ENCODE measurements at regions of chr17 and their contacts with region 1.

Region 1: GRCh38 chr17:75205037-75205792 is at the start of gene NUP85:
- DNase-seq: peak; percentile 89 to 96
- H3K4me3 ChIP-seq: peak within 1 kb of the TSS; percentile 81 to 92
- H3K27ac ChIP-seq: peak within 1 kb of the TSS; percentile 89 to 92
- H3K4me1 ChIP-seq: peaks cover 0 to 24% (median 12%) of the 10 kb centered on the region in 4 donors
- H3K27me3 ChIP-seq: no peaks in the 10 kb centered on the region
- CTCF ChIP-seq: no peak

Region 2: DNA sequence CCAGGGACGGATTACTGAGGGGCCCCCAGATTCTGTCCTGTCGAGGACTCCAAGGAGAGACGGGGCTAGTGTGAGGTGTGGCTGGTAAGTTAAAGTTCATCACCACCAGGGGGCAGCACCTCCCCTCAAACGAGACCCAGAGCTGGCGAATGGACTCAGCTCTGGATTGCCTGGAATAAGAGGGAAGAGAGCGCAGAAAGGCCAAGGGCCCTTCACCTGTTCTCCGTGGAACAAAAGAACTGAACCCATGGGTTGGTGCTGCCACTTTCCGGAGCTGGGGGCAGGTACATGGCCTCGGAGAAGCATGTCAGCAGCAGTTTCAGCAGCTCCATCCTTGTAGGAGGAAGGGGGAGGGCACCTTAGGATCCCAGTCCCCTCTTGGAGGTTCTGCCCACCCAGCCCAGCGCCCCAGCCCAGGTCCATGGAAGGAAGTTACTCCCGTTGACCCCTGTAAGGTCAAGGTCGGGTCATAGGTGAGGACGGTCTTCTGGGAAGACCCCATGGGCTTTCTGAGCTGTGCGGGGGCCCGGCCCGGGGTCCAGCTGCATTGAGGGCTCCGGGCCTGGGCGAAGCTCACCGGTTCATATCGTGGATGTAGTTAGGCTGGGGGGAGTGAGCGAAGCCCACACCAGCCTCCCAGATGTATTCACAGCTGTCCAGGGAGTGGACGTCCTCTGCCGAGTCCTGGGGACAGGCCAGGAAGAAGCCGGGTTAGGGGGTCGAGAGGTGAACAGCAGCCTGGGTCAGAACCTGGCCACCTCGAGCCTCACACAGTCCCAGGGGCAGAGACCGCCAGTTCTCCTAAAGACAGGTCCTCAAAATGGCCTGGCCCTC is 243.3 kb before region 1 on chr17:
- intact Hi-C with region 1: loop called (anchors 10 kb)
- DNase-seq: peak; percentile 84 to 91
- H3K4me3 ChIP-seq: no peak overlapping the region
- H3K27ac ChIP-seq: no peak overlapping the region
- H3K4me1 ChIP-seq: peaks cover 0 to 7% (median 0%) of the 10 kb centered on the region in 4 donors
- H3K27me3 ChIP-seq: peaks cover 0 to 28% of the 10 kb centered on the region in 2 donors
- CTCF ChIP-seq: peak; percentile 75 to 86

Region 3: DNA sequence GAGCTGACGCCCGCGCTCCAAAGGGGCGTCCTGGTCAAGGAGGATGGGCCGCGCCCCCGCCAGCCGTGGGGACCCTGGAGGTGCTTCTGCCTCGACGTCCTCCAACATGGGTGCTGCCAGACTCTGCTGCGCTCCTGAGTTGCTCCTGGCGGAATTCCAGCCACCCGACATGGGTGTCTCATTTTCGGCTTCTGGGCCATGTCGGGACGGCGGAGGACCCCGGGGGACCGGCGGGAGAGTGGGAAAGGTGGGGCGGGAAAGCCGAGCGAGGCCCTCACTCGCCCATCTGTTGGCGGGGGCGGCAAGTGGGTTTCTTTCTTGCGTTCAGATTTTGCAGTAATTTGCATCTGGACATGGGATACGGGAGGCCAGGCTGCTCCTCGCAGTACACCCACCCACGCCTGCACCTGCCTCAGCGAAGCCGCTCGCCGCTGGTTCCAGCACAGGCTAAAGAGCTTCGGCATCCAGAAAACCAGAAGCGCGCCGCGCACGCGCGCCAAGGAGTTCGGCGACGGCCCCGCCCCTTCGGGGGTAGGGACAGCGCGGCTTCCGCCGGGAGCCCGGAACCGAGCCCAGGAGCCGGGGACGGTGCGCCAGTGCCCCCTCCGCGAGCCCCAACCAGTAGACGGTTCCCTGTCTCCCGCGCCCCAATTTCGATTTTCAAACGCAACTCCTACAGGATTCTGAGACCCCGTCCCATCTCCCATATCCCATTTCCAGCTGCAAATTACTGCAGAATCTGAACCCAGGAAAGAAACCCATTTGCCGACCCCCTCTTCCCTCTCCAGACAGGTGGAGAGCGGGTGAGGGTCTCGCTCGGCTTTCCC is 95.6 kb before region 1 on chr17 and contains the start of gene ARMC7:
- intact Hi-C with region 1: loop called (anchors 10 kb)
- DNase-seq: peak; percentile 84 to 95
- H3K4me3 ChIP-seq: peak within 1 kb of the TSS; percentile 78 to 89
- H3K27ac ChIP-seq: peak within 1 kb of the TSS; percentile 74 to 76
- H3K4me1 ChIP-seq: peaks cover 0 to 38% (median 20%) of the 10 kb centered on the region in 4 donors
- H3K27me3 ChIP-seq: peaks cover 0 to 9% of the 10 kb centered on the region in 2 donors
- CTCF ChIP-seq: no peak

Region 4: DNA sequence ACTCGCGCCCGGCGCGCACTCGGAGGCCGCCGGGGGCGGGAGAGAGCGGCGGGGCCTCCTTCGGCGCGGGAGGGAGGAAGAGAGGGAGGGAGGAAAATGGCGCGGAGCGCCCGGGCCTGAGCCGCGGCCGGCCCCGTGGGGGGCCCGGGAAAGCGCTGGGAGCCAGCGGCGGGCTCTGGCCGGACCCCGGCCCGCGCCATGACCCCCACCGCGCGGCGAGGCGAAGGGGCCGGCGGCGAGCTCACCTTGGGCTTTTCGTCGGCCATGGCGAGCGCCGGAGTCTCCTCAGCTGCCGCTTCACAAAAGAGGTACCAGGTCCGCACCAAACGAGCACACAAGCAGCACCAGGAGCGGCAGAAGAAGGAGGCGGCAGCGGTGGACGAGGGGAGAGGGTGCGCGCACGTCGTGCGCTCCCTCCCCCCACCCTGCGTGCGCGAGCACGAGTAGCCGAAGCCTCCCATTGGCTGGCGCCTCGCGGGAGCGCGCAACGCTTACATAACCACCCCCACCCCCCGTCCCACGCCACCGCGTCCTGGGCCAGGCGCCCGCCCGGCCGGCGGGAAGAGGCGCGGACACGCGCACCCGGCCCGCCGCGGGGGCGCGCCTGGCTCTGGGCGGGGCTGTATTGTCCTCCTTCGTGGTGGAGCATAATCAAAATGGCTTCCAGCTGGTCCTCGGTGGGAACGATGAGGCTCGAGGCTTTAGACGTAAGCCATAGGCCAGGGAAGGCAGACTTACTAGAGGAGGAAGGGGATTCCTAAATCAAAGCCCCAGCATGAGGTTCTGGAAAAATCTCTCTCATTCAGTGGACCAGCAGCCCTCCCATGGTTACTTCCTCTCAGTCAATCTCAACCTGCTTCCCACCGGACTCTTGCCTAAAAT is 22.4 kb before region 1 on chr17 and contains the start of gene SUMO2:
- intact Hi-C with region 1: loop called (anchors 2 kb)
- DNase-seq: peak; percentile 92 to 97
- H3K4me3 ChIP-seq: peak within 1 kb of the TSS; percentile 99 to 100
- H3K27ac ChIP-seq: peak within 1 kb of the TSS; percentile 98 to 99
- H3K4me1 ChIP-seq: peaks cover 0 to 33% (median 19%) of the 10 kb centered on the region in 4 donors
- H3K27me3 ChIP-seq: no peaks in the 10 kb centered on the region
- CTCF ChIP-seq: peak; percentile 42 to 54

Measured in tibial artery (tissue), 4 donors.